Transverse colon (tissue), 4 donors: ENCODE measurements at regions of chr12 and their contacts with region 1.

Region 1: DNA sequence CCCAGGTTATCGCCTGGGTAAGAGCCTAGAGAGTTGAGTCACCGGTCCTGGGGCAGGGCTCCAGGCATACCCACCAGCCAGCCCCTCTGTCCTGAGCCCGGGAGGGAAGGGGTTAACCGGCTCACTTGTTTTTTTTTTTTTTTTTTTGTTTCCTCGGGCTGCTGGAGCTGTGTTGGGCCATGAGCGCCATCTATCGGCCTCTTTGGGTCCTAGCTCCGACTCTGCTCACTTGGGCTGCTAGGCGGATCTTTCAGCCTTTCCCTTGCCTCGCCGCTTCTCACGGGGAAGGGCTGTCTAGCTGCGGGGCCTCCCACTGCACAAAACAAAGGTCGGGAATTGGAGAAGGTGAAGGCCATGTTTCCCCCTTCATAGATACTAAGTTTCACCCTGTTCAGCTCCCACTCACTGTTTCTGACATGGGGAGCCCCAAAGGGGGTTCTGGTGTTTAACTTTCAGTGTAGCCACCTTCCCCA is 2.8 kb upstream of the SMUG1 start:
- DNase-seq: peak; percentile 83
- H3K4me3 ChIP-seq: no peak overlapping the region
- H3K27ac ChIP-seq: no peak overlapping the region
- H3K4me1 ChIP-seq: peaks cover 0 to 15% (median 9%) of the 10 kb centered on the region in 4 donors
- H3K27me3 ChIP-seq: peaks cover 61% of the 10 kb centered on the region
- CTCF ChIP-seq: peak; percentile 76 to 83 (median 79)
- EP300 ChIP-seq: no peak
- POLR2A ChIP-seq: no peak

Region 2: GRCh38 chr12:53701518-53702260 is 489.9 kb before region 1 on chr12:
- in situ Hi-C with region 1: loop called in 1 of 4 experiments (anchors 25 kb)
- intact Hi-C with region 1: no loop called
- DNase-seq: peak; percentile 84
- H3K4me3 ChIP-seq: no peak overlapping the region
- H3K27ac ChIP-seq: no peak overlapping the region
- H3K4me1 ChIP-seq: peaks cover 0 to 5% (median under 1%) of the 10 kb centered on the region in 4 donors
- H3K27me3 ChIP-seq: peaks cover 96% of the 10 kb centered on the region
- CTCF ChIP-seq: peak; percentile 81 to 88 (median 85)
- EP300 ChIP-seq: no peak
- POLR2A ChIP-seq: no peak

Region 3: GRCh38 chr12:53757095-53757770 is 434.4 kb before region 1 on chr12:
- in situ Hi-C with region 1: loop called in 1 of 4 experiments (anchors 25 kb)
- intact Hi-C with region 1: no loop called
- DNase-seq: peak; percentile 82
- H3K4me3 ChIP-seq: no peak overlapping the region
- H3K27ac ChIP-seq: no peak overlapping the region
- H3K4me1 ChIP-seq: peaks cover 0 to 9% (median 9%) of the 10 kb centered on the region in 4 donors
- H3K27me3 ChIP-seq: peaks cover 95% of the 10 kb centered on the region
- CTCF ChIP-seq: peak; percentile 77 to 94 (median 86)
- EP300 ChIP-seq: no peak
- POLR2A ChIP-seq: no peak

Region 4: GRCh38 chr12:54005853-54006686 is 185.5 kb before region 1 on chr12:
- in situ Hi-C with region 1: loop called in 1 of 4 experiments (anchors 5 kb)
- intact Hi-C with region 1: loop called (anchors 5 kb)
- DNase-seq: peak; percentile 88
- H3K4me3 ChIP-seq: peak overlapping the region in 2 of 4 donors; percentile 13 to 32
- H3K27ac ChIP-seq: no peak overlapping the region
- H3K4me1 ChIP-seq: peaks cover 0 to 22% (median 14%) of the 10 kb centered on the region in 4 donors
- H3K27me3 ChIP-seq: peaks cover 98% of the 10 kb centered on the region
- CTCF ChIP-seq: peak; percentile 91 to 96 (median 95)
- EP300 ChIP-seq: no peak
- POLR2A ChIP-seq: no peak

Region 5: DNA sequence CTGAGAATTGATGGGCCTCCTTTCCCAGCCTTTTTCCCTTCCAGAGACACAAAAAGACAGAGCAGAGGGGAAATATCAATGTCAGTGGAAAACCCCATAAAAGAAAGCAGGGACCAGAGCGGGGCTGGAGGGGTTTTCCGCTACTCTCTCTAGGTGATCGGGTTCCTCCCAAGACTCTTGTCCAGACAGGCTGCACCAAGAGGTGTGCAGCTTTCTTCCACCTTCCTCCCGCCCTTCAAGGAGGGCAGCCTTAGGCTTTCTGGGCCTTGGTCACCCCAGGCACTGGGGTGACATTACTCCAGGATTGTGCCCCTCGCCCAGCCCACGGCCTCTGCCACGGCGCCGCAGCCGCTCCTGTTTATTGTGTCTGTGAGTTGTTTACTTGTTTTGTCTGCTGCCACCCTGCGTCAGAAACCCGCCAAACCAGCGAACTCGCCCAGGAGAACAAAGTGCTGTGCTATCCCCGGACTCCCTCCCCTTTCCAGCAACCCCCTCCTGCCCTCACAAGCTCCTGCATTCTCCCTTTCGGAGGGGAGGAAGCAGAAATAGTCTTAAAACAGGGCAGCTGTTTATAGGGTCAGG is 170.1 kb before region 1 on chr12:
- in situ Hi-C with region 1: loop called in 2 of 4 experiments (anchors 5 to 10 kb)
- intact Hi-C with region 1: no loop called
- DNase-seq: no peak
- H3K4me3 ChIP-seq: no peak overlapping the region
- H3K27ac ChIP-seq: no peak overlapping the region
- H3K4me1 ChIP-seq: peaks cover 10 to 33% (median 16%) of the 10 kb centered on the region in 4 donors
- H3K27me3 ChIP-seq: peaks cover 100% of the 10 kb centered on the region
- CTCF ChIP-seq: no peak
- EP300 ChIP-seq: no peak
- POLR2A ChIP-seq: no peak

Region 6: GRCh38 chr12:54032627-54033100 is 158.9 kb before region 1 on chr12 and contains the start of gene HOXC5:
- in situ Hi-C with region 1: loop called in 2 of 4 experiments (anchors 5 to 10 kb)
- intact Hi-C with region 1: loop called (anchors 5 kb)
- DNase-seq: peak; percentile 65
- H3K4me3 ChIP-seq: peak within 1 kb of the TSS; percentile 3 to 37 (median 14)
- H3K27ac ChIP-seq: peak within 1 kb of the TSS in 3 of 4 donors; percentile 2 to 57 (median 14)
- H3K4me1 ChIP-seq: peaks cover 7 to 29% (median 22%) of the 10 kb centered on the region in 4 donors
- H3K27me3 ChIP-seq: peaks cover 100% of the 10 kb centered on the region
- CTCF ChIP-seq: peak; percentile 89 to 95 (median 91)
- EP300 ChIP-seq: no peak
- POLR2A ChIP-seq: no peak
- total RNA-seq, gene HOXC5: 0.27 to 0.60 TPM in 2 of 4 donors, not detected in the others